Activated CD4-positive, alpha-beta T cell treated with anti-CD3 and anti-CD28 coated beads, Interleukin-2, amount 10 ng/mL, durations not matched to agents 7 days and 5 days (primary cell): ENCODE measurements at regions of chr1 and their contacts with region 1.

Region 1: DNA sequence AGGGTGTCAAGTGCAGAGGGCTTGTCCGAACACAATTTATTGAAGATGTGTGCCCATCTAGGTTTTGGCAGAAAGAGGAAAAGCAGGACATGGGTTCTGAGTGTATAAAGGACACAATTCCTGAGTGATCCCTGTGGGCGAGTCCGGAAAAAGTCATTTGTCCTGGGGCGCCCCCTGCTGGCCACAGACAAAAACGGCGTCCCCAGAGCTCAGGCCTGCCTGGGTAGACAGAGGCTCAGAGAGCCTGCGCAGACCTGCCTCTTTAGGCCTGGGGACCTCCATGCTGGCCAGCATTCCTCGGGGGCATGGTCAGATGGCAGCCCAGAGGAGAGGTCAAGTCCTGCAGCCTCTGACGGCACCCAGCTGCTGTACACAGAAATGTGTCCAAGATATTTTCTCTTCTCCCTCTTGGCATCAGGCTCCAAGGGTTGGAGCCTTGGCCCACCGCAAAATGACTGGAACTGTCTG is 65.5 kb upstream of the LRP8 start:
- DNase-seq: peak; percentile 69
- H3K4me3 Mint-ChIP-seq: no peak overlapping the region
- H3K27ac Mint-ChIP-seq: no peak overlapping the region
- H3K4me1 Mint-ChIP-seq: no peaks in the 10 kb centered on the region
- H3K27me3 Mint-ChIP-seq: peaks cover 3% of the 10 kb centered on the region

Region 2: DNA sequence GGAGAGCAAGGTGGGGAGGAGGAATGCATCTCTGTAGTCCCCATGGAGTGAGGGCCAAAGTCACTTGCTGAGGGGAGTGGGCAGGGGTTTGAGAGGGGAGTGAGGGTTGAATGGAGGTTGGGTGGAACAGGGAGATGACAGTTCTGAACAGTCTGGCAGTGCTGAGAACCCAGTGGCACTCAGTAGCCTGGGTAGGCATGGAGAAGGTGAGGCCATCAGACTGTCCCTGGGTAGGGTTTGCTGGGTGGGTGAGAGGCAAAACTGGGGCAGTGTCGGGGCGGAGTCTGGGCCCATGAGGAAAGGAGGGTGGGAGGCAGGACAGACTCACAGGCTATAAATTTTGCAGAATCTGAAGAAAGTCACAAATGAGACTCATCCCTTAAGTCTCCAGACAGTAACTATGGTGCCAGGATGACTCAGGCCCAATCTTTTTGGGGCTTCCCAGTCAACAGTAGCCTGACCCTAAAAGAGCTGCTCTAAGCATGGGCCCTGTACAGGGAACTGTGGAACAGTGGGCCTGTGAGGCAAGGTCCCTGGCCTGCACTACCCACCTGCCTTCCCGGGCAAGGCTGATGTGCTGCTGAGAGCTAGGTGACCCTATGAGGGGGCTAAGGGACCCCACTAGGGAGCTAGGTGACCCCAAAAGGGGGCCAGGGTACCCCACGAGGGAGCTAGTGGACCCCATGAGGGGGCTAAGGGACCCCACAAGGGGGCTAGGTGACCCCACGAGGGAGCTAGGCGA is 14.8 kb after region 1 on chr1:
- CTCF ChIA-PET with region 1: interaction called, 20 read pairs
- POLR2A ChIA-PET with region 1: no interaction called
- DNase-seq: no peak
- H3K4me3 Mint-ChIP-seq: no peak overlapping the region
- H3K27ac Mint-ChIP-seq: no peak overlapping the region
- H3K4me1 Mint-ChIP-seq: peaks cover 27% of the 10 kb centered on the region
- H3K27me3 Mint-ChIP-seq: peaks cover 3% of the 10 kb centered on the region

Region 3: GRCh38 chr1:53636621-53637171 is 243.3 kb after region 1 on chr1:
- CTCF ChIA-PET with region 1: no interaction called
- POLR2A ChIA-PET with region 1: no interaction called
- DNase-seq: no peak
- H3K4me3 Mint-ChIP-seq: no peak overlapping the region
- H3K27ac Mint-ChIP-seq: no peak overlapping the region
- H3K4me1 Mint-ChIP-seq: no peaks in the 10 kb centered on the region
- H3K27me3 Mint-ChIP-seq: no peaks in the 10 kb centered on the region